ENCODE measurements at regions of chr14 and their contacts with region 1.

Region 1: GRCh38 chr14:105045710-105046326 is 19.4 kb downstream of the GPR132 start:
- DNase-seq: peak in 1 of 2 donors; percentile 95
- H3K4me3 ChIP-seq: peak overlapping the region in 1 of 2 donors; percentile 35
- H3K27ac ChIP-seq: no peak overlapping the region
- H3K4me1 ChIP-seq: no peaks in the 10 kb centered on the region
- H3K27me3 ChIP-seq: no peaks in the 10 kb centered on the region
- CTCF ChIP-seq: peak; percentile 97 to 100 (median 98)

Region 2: GRCh38 chr14:104895786-104896661 is 149.8 kb before region 1 on chr14:
- intact Hi-C with region 1: loop called (anchors 1 kb)
- DNase-seq: peak in 1 of 2 donors; percentile 62
- H3K4me3 ChIP-seq: no peak overlapping the region
- H3K27ac ChIP-seq: no peak overlapping the region
- H3K4me1 ChIP-seq: no peaks in the 10 kb centered on the region
- H3K27me3 ChIP-seq: no peaks in the 10 kb centered on the region
- CTCF ChIP-seq: no peak

Region 3: GRCh38 chr14:105389976-105390848 is 344.4 kb after region 1 on chr14:
- intact Hi-C with region 1: no loop called
- DNase-seq: no peak
- H3K4me3 ChIP-seq: no peak overlapping the region
- H3K27ac ChIP-seq: peak overlapping the region; percentile 30 to 38
- H3K4me1 ChIP-seq: no peaks in the 10 kb centered on the region
- H3K27me3 ChIP-seq: no peaks in the 10 kb centered on the region
- CTCF ChIP-seq: no peak

Measured in ascending aorta (tissue), 2 donors.